AG04449 (cell line): ENCODE measurements at regions of chr14 and their contacts with region 1.

Region 1: GRCh38 chr14:102096214-102097114 is 9.6 kb upstream of the HSP90AA1 start:
- DNase-seq: no peak
- H3K4me3 ChIP-seq: no peak overlapping the region; the same call in 1 of the 2 replicates
- CTCF ChIP-seq: peak; percentile 76

Region 2: DNA sequence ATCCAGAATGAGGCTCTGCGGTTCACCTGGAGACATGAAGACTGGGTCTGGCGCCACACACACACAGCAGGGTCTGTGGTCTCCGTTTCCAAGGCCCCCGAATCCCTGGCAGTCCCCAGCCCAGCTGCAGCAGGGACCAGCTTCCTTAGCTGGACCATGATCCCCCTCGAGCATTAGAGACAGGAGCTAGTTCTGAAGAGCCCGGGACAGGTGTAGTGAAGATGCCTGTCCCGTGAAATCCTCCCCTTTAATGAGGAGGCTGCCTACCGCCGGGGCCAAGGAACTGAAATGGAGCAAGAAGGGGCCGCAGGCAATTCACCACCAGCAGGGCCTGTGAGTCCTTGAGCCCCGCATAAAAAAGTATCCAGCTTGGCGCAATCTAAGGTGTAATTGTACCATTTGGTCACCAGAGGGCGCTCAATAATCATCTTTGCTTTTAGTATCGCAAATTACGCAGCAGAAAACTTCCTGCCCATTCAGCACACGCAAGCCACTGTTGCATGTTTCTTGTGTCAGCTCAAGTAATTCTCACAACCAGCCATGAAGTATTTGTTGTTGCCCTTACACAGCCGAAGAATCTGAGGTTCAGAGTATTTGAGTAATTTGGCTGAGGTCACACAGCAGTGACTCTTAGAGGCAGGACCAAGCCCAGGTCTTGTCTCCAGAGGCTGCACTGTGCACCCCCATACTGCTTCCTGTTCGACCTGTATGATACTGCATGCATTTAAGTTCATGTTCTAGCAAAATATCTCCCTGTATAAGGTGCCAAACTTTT is 389.2 kb before region 1 on chr14:
- CTCF ChIA-PET with region 1: interaction called, 28 read pairs
- POLR2A ChIA-PET with region 1: no interaction called
- DNase-seq: peak; percentile 36
- H3K4me3 ChIP-seq: no peak overlapping the region; the same call in 1 of the 2 replicates
- CTCF ChIP-seq: peak; percentile 61

Region 3: DNA sequence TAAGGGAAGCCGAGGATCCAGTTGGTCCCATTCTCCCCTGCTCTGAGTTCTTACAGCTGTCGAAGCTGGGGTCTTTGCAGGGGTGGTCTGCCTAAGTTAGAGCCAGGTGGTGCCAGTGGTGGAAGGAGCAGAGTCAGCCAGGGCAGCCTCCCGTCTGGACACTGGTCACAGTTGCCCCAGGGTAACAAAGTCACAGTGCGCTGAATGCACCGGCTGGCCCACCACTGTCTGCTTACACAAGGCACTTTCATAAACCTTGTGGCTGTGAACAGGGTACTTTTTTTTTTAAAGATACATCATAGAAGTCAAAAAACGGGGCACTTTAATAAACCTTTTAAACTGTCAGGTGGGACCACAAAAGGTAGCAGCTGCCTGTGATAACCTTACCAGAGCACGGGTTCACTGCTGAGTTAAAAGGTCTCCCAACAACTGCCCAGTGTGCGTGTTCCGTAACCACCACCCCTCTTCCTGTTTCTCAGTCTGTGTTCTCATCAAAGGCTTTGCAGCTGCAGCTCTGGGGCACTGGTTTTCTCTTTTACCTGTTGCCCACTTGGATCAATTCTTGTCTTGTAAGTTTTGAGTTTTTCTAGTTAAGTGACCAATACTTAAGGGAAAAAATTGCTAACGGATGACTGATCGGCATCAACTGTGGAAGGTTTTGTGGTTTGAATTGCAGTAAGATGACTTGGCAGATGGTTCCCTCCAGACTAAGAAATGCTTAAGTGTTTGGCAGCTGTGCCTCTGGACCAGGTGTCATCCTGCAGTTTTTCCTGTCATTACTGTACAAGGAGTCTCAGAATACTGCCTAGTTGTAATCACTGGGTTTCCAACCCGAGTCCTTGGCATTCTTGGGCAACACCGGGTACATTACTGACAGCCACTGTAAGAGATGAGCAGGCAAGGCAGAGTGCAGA is 76.1 kb before region 1 on chr14:
- CTCF ChIA-PET with region 1: interaction called, 13 read pairs
- POLR2A ChIA-PET with region 1: no interaction called
- DNase-seq: peak; percentile 71
- H3K4me3 ChIP-seq: no peak overlapping the region
- CTCF ChIP-seq: no peak

Region 4: DNA sequence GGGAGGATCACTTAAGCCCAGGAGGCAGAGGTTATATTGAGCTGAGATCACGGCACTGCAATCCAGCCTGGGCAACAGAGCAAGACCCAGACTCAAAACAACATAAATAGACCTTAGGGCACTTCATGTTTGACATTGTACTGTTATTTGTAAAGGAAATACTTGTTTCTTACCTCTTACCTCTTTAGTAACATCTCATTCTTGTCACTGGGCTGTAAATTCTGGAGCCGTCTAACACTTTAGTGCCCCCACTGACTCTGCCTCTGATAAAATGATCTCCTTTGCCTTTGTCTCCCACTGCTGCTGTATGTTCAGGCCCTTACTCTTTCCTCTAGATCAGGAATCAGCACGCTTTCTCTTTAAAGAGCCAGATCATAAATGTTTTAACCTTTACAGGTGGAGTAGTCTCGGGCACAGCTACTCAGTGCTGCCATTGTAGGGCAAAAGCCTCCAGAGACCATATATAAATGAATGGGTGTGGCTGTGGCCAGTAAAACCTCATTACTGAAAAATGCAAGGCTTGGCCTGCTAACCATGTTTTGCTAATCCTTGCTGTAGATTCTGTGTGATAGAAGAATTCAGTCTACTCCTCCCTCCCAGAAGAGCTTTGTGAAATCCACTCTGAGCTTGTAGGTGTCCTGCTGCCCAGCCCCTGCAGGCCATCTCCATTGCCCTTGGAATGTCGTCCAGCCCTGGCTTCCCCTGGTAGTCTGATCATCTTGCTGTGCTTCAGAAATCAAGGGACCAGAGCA is 67.9 kb before region 1 on chr14:
- CTCF ChIA-PET with region 1: interaction called, 13 read pairs
- POLR2A ChIA-PET with region 1: no interaction called
- DNase-seq: peak; percentile 58
- H3K4me3 ChIP-seq: no peak overlapping the region
- CTCF ChIP-seq: no peak

Region 5: DNA sequence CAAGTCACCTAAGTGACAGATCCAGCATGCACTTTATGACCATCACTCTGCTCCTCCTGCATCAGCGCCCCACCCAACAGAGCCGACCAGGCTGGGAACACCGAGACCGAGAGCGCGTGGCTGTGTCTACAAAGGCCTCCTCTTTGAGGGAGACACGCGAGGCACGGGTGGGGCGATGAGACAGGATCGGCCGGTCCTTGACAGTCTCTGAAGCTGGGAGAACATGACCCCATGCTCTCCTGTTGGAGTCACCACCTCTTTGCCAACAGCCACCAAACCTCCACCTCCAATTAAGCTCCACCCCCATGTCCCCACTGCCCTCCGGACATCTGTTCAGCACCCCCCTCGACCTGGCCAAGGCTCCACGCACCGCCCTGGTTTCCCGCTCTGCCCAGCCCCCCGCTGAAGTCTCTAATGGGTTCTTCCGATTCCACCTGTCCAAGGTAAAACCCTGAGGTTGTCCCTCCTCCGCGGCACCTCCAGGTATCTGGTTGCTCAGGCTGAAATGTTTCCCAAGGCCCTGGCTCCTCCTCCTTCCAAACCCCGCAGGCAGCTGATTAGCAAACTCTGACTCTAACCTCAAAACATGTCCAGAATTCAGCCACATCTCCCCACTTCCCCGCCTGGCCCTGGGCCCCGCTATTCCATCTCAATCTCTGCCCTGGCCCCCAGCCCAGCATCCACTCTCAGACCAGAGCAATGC is 41.1 kb before region 1 on chr14:
- CTCF ChIA-PET with region 1: interaction called, 75 read pairs
- POLR2A ChIA-PET with region 1: interaction called, 3 read pairs
- DNase-seq: peak; percentile 33
- H3K4me3 ChIP-seq: no peak overlapping the region
- CTCF ChIP-seq: no peak

Region 6: DNA sequence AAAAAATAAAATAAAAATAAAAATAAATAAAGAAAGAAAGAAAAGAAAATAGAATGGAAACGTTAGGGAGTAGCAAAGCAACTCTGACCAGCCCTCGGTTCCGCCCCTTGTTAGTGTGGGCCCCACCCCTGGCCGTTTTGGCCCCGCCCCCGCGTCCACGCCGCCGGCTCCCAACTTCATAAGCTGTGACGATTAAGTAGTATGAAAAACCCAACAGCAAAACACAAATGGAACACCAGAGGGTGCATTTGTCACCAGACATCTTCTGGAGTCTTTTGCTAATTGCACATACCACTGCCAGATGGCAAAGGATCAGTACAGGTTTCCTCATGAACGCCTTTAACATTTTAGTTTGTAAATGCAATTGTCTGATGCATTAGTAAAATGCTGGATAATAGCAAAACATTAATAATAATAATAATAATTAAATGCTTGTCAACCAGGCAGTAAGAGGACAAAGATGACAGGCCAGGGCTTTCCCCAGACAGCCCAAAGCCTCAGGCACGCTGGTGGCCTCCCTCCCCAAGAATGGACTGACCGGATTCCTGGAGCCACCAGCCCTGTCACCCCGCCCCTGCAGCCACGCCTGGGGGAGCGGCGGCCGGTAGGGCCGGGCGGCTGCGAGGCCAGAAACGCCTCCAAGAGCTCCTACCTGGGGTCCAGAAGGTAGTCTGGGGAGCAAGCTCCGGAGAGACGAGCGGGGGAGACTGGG is 33.2 kb before region 1 on chr14:
- CTCF ChIA-PET with region 1: interaction called, 75 read pairs
- POLR2A ChIA-PET with region 1: interaction called, 3 read pairs
- DNase-seq: peak; percentile 54
- H3K4me3 ChIP-seq: no peak overlapping the region
- CTCF ChIP-seq: peak; percentile 55

Region 7: GRCh38 chr14:102116361-102117070 is 20.1 kb after region 1 on chr14:
- CTCF ChIA-PET with region 1: interaction called, 14 read pairs
- POLR2A ChIA-PET with region 1: no interaction called
- DNase-seq: no peak
- H3K4me3 ChIP-seq: no peak overlapping the region
- CTCF ChIP-seq: no peak